Mucosa of descending colon (tissue), 3 donors: ENCODE measurements at regions of chr12 and their contacts with region 1.

Region 1: GRCh38 chr12:7995266-7995963 is 37.1 kb upstream of the FOXJ2 start:
- DNase-seq: peak; percentile 67 to 82 (median 76)
- ATAC-seq: peak; percentile 99
- H3K4me3 ChIP-seq: no peak overlapping the region
- H3K4me1 ChIP-seq: peaks cover 5% of the 10 kb centered on the region
- CTCF ChIP-seq: peak; percentile 68

Region 2: DNA sequence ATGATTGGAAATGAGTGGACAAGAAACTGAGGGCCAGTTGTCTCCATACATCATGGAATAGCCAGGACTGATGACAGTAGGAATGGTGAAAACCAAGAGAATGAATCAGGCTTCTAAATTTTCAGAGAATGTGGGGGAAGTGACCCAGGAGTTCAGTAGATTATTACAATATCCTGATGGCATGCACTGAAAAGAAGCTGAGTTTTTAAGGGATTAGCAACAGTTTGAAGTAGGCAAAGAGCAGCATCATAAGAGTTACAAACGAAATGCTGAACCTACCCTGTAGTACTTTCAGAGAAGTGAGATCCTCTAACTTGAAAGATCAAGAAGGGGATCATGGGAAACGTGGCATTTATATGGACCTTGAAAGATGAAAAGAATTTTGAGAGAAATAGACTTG is 135.9 kb before region 1 on chr12:
- intact Hi-C with region 1: loop called (anchors 5 to 10 kb)
- DNase-seq: no peak
- ATAC-seq: no peak
- H3K4me3 ChIP-seq: no peak overlapping the region
- H3K4me1 ChIP-seq: no peaks in the 10 kb centered on the region
- CTCF ChIP-seq: no peak

Region 3: DNA sequence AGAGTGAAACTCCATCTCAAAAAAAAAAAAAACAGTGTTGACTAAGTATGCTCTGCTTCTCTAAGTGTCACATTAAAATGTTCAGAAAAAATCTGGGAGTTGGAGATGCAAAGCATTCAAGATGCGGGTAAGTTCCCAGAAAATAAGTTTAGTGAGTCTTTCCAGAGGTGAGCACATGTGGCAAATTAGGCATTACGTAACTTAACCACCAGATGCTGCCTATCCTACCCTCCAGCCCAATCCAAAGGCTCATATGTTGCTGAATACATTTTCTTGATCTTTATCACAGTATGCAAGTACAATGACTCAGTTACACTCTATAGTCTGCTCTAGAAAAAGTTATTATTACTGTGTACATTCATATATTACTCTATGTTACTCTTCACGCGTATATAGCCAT is 126.3 kb before region 1 on chr12:
- intact Hi-C with region 1: loop called (anchors 5 to 10 kb)
- DNase-seq: no peak
- ATAC-seq: no peak
- H3K4me3 ChIP-seq: no peak overlapping the region
- H3K4me1 ChIP-seq: no peaks in the 10 kb centered on the region
- CTCF ChIP-seq: no peak

Region 4: GRCh38 chr12:7933255-7933729 is 62.1 kb before region 1 on chr12:
- intact Hi-C with region 1: loop called (anchors 5 to 10 kb)
- DNase-seq: peak; percentile 47 to 74 (median 73)
- ATAC-seq: peak; percentile 85
- H3K4me3 ChIP-seq: no peak overlapping the region
- H3K4me1 ChIP-seq: no peaks in the 10 kb centered on the region
- CTCF ChIP-seq: no peak

Region 5: GRCh38 chr12:8771072-8771471 is 775.7 kb after region 1 on chr12:
- intact Hi-C with region 1: no loop called
- DNase-seq: no peak
- ATAC-seq: no peak
- H3K4me3 ChIP-seq: no peak overlapping the region
- H3K4me1 ChIP-seq: no peaks in the 10 kb centered on the region
- CTCF ChIP-seq: no peak